WTC11 (cell line): ENCODE measurements at regions of chr13 and their contacts with region 1.

Region 1: GRCh38 chr13:32267836-32268439 is 47.2 kb downstream of the ZAR1L start:
- DNase-seq: peak; percentile 85
- ATAC-seq: peak; percentile 100
- H3K4me3 Mint-ChIP-seq: no peak overlapping the region
- H3K27ac Mint-ChIP-seq: 0 out of 2 replicates have a peak overlapping the region, but pooled peaks have one; percentile 39
- H3K4me1 Mint-ChIP-seq: no peaks in the 10 kb centered on the region
- H3K27me3 Mint-ChIP-seq: no peaks in the 10 kb centered on the region
- CTCF ChIP-seq: peak; percentile 98

Region 2: DNA sequence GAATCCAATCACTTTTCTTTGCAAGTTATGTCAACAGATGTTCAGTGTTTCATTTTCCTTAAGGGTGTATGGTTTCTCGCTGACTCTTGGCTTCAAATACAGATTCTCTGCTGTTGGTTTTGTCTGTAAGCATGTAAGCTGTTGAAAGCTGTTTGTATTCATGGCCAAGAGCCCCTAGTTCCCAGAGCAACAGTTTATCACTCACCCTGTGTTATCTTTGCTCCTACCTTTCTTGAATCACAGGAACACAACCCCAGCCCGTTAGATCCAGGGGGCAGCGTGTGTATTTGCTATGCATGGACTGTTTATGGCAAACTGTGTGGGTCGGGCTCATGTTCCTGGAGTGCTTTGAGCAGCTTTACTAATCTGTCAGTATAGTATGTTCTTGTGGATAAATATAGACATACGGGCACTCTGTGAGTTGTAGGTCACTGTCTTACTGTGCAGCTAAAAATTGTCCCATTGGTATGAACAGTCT is 207.5 kb before region 1 on chr13:
- CTCF ChIA-PET with region 1: no interaction called
- POLR2A ChIA-PET with region 1: no interaction called
- DNase-seq: no peak
- ATAC-seq: no peak
- H3K4me3 Mint-ChIP-seq: no peak overlapping the region
- H3K27ac Mint-ChIP-seq: no peak overlapping the region
- H3K4me1 Mint-ChIP-seq: peaks cover 16% of the 10 kb centered on the region
- H3K27me3 Mint-ChIP-seq: no peaks in the 10 kb centered on the region
- CTCF ChIP-seq: no peak

Region 3: GRCh38 chr13:32246468-32246867 is 21.5 kb before region 1 on chr13:
- CTCF ChIA-PET with region 1: interaction called, 28 read pairs
- POLR2A ChIA-PET with region 1: no interaction called
- DNase-seq: peak; percentile 81
- ATAC-seq: peak; percentile 100
- H3K4me3 Mint-ChIP-seq: no peak overlapping the region
- H3K27ac Mint-ChIP-seq: no peak overlapping the region
- H3K4me1 Mint-ChIP-seq: peaks cover 4% of the 10 kb centered on the region
- H3K27me3 Mint-ChIP-seq: no peaks in the 10 kb centered on the region
- CTCF ChIP-seq: peak; percentile 54

Region 4: DNA sequence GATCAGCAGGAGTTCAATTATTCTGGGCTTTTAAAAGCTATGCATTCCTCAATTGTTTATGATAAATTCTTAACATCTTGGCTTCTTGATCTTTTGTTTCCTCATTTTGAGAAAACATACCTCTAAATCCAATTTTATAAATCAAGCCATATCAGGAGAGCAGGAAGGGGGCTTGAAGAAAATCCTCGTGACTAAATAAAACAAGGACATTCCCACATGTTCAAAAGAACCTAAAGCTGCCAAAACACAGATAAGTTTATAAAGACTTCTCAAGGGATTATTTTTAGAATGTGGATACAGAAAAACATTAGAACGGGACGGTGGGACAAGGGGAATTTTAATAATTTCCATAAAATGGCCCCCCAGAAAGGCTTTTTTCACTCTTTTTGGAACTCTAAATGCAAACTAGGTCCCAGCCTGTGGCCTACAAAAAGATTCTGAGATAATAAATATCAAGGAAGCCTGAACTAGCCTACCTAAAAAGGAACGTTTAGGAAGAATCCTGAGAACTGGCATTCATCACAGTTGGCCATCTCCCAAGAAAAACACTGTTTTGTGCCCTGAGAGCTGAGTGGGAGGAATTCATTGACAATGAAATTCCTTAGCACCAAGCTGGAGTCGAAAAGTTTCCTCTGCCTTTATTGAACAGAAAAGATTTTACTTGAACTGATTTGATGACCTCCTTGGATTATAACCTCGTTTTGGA is 17.1 kb after region 1 on chr13:
- CTCF ChIA-PET with region 1: interaction called, 23 read pairs
- POLR2A ChIA-PET with region 1: no interaction called
- DNase-seq: no peak
- ATAC-seq: peak; percentile 20; the same call in 1 of the 2 replicates
- H3K4me3 Mint-ChIP-seq: no peak overlapping the region
- H3K27ac Mint-ChIP-seq: no peak overlapping the region
- H3K4me1 Mint-ChIP-seq: peaks cover 9% of the 10 kb centered on the region
- H3K27me3 Mint-ChIP-seq: no peaks in the 10 kb centered on the region
- CTCF ChIP-seq: no peak

Region 5: GRCh38 chr13:32305646-32306045 is 37.7 kb after region 1 on chr13:
- CTCF ChIA-PET with region 1: interaction called, 12 read pairs
- POLR2A ChIA-PET with region 1: no interaction called
- DNase-seq: no peak
- ATAC-seq: no peak
- H3K4me3 Mint-ChIP-seq: no peak overlapping the region
- H3K27ac Mint-ChIP-seq: no peak overlapping the region
- H3K4me1 Mint-ChIP-seq: no peaks in the 10 kb centered on the region
- H3K27me3 Mint-ChIP-seq: no peaks in the 10 kb centered on the region
- CTCF ChIP-seq: no peak

Region 6: DNA sequence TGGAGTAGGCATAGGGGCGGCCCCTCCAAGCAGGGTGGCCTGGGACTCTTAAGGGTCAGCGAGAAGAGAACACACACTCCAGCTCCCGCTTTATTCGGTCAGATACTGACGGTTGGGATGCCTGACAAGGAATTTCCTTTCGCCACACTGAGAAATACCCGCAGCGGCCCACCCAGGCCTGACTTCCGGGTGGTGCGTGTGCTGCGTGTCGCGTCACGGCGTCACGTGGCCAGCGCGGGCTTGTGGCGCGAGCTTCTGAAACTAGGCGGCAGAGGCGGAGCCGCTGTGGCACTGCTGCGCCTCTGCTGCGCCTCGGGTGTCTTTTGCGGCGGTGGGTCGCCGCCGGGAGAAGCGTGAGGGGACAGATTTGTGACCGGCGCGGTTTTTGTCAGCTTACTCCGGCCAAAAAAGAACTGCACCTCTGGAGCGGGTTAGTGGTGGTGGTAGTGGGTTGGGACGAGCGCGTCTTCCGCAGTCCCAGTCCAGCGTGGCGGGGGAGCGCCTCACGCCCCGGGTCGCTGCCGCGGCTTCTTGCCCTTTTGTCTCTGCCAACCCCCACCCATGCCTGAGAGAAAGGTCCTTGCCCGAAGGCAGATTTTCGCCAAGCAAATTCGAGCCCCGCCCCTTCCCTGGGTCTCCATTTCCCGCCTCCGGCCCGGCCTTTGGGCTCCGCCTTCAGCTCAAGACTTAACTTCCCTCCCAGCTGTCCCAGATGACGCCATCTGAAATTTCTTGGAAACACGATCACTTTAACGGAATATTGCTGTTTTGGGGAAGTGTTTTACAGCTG is 47.5 kb after region 1 on chr13 and contains the starts of genes BRCA2 and ZAR1L:
- CTCF ChIA-PET with region 1: interaction called, 13 read pairs
- POLR2A ChIA-PET with region 1: no interaction called
- DNase-seq: peak; percentile 81
- ATAC-seq: peak; percentile 81
- H3K4me3 Mint-ChIP-seq: peak within 1 kb of the TSS; percentile 87
- H3K27ac Mint-ChIP-seq: peak within 1 kb of the TSS; percentile 97
- H3K4me1 Mint-ChIP-seq: peaks cover 12% of the 10 kb centered on the region
- H3K27me3 Mint-ChIP-seq: no peaks in the 10 kb centered on the region; the same call in 1 of the 2 replicates
- CTCF ChIP-seq: no peak
- total RNA-seq, gene BRCA2: 14.8 to 21.6 TPM (median 18.2 TPM) in 3 replicates
- total RNA-seq, gene ZAR1L: 0.25 to 0.48 TPM (median 0.33 TPM) in 3 replicates